Left ventricle myocardium inferior (tissue), 1 donor: ENCODE measurements at regions of chr17 and their contacts with region 1.

Region 1: DNA sequence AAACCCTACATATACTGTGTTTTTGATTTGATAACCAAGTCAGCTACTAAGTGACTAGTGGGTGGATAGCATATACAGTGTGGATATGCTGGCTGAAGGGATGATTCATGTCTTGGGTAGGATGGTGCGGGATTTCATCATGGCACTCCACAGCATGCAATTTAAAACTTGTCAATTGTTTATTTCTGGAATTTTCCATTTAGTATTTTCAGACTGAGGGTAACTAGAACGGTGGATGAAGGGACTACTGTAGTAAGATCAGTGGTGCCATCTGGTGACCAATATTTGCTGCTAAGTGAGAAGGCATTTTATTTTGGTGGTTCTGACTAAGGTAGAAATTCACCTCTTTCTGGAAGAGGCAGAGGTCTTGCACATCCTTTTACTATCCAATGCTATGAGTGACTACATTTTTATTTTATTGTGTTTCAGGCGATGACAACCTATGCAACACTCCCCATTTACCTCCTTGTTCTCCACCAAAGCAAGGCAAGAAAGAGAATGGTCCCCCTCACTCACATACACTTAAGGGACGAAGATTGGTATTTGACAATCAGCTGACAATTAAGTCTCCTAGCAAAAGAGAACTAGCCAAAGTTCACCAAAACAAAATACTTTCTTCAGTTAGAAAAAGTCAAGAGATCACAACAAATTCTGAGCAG is 3.1 kb downstream of the CDC6 start:
- DNase-seq: no peak
- H3K4me3 ChIP-seq: no peak overlapping the region
- H3K27ac ChIP-seq: peak overlapping the region; percentile 23
- H3K4me1 ChIP-seq: peaks cover 50% of the 10 kb centered on the region
- H3K27me3 ChIP-seq: no peaks in the 10 kb centered on the region
- CTCF ChIP-seq: peak; percentile 70

Region 2: GRCh38 chr17:38994026-38994425 is 1296.7 kb before region 1 on chr17:
- intact Hi-C with region 1: no loop called
- DNase-seq: no peak
- H3K4me3 ChIP-seq: no peak overlapping the region
- H3K27ac ChIP-seq: peak overlapping the region; percentile 65
- H3K4me1 ChIP-seq: peaks cover 6% of the 10 kb centered on the region
- H3K27me3 ChIP-seq: no peaks in the 10 kb centered on the region
- CTCF ChIP-seq: no peak

Region 3: GRCh38 chr17:40209404-40210093 is 81.2 kb before region 1 on chr17:
- intact Hi-C with region 1: loop called (anchors 10 kb)
- DNase-seq: no peak
- H3K4me3 ChIP-seq: no peak overlapping the region
- H3K27ac ChIP-seq: no peak overlapping the region
- H3K4me1 ChIP-seq: no peaks in the 10 kb centered on the region
- H3K27me3 ChIP-seq: no peaks in the 10 kb centered on the region
- CTCF ChIP-seq: no peak

Region 4: DNA sequence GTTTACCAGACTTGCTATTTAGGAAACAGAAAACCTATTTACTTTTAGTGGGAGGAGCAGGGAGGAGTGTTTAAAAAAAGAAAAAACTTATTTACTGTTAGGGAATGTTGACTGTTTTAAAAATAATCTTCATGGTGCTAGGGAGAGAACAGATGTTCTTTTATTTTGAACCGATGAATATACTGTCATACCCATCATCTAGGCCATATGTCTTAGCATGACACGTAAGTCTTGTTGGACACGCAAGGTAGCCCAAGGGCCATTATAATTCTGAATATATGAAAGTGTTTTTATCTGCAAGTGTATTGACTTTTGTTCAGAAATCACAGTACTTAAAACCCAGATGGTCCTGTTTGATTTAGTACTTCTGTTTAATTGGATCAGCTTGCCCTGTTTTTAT is 60.1 kb before region 1 on chr17:
- intact Hi-C with region 1: no loop called
- DNase-seq: no peak
- H3K4me3 ChIP-seq: no peak overlapping the region
- H3K27ac ChIP-seq: no peak overlapping the region
- H3K4me1 ChIP-seq: peaks cover 17% of the 10 kb centered on the region
- H3K27me3 ChIP-seq: no peaks in the 10 kb centered on the region
- CTCF ChIP-seq: no peak